ENCODE measurements at regions of chr6 and their contacts with region 1.

Region 1: DNA sequence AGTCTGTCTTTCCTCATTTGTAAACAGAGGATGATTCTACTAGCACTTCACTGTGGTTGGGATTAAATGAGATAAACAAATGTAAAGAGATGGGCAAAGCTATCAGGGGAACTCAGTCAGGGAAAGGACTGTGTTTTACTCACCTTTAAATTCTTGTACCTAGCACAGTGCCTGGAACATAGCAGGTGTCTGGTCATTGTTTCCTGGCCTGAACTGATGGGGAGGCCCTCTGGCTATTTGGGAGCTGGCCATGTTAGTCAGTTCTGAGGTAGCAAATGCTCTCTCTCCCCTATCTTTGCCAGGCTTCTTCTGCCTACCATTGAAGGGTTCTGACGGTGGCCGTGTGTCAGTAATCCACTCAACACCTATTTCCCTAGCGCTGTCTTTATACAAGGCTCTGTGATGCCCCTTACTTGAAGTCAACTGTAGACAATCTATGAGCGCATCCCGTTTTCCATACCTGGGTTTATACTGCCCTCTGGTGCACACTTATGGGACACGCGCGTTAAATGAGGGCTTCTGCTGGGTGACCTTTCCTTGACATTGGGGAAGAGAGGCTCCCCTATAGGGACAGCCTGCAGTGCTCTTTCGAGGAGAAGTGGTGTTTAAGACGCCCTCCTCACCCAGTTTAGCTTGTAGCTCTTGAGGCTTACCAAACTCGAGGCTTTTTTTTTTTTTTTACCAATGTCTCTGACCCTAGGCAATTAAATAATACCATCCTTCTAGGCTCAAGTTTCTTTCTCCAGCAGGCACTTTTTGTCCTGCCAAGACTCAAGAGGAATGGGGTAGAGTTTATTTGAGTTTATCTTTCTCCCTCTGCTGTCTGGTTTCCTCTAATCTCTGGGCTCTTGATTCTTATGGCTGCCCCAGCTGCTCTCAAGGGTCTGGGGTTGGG is 4.0 kb upstream of the SPATS1 start:
- DNase-seq: peak; percentile 82
- H3K4me3 ChIP-seq: no peak overlapping the region
- H3K27ac ChIP-seq: no peak overlapping the region
- H3K4me1 ChIP-seq: no peaks in the 10 kb centered on the region
- H3K27me3 ChIP-seq: peaks cover 22% of the 10 kb centered on the region
- CTCF ChIP-seq: peak; percentile 81

Region 2: GRCh38 chr6:44172731-44173500 is 165.6 kb before region 1 on chr6:
- CTCF ChIA-PET with region 1: no interaction called
- POLR2A ChIA-PET with region 1: no interaction called
- intact Hi-C with region 1: loop called (anchors 2 kb)
- DNase-seq: peak; percentile 85
- H3K4me3 ChIP-seq: no peak overlapping the region
- H3K27ac ChIP-seq: no peak overlapping the region
- H3K4me1 ChIP-seq: no peaks in the 10 kb centered on the region
- H3K27me3 ChIP-seq: no peaks in the 10 kb centered on the region
- CTCF ChIP-seq: peak; percentile 97